ENCODE measurements at regions of chr1 and their contacts with region 1.

Region 1: GRCh38 chr1:92877792-92878191 is 46.0 kb downstream of the RPL5 start:
- DNase-seq: no peak
- H3K4me3 ChIP-seq: peak overlapping the region in 54 of 59 donors; percentile 1 to 67 (median 44)
- H3K27ac ChIP-seq: peak overlapping the region; percentile 53 to 98 (median 94)
- H3K27me3 ChIP-seq: no peaks in the 10 kb centered on the region
- CTCF ChIP-seq: no peak

Region 2: GRCh38 chr1:92944901-92945747 is 67.3 kb after region 1 on chr1:
- intact Hi-C with region 1: loop called (anchors 5 kb)
- DNase-seq: peak in 1 of 10 donors; percentile 56
- H3K4me3 ChIP-seq: peak overlapping the region in 22 of 59 donors; percentile 1 to 37 (median 14)
- H3K27ac ChIP-seq: peak overlapping the region; percentile 35 to 96 (median 90)
- H3K27me3 ChIP-seq: no peaks in the 10 kb centered on the region
- CTCF ChIP-seq: no peak

Region 3: DNA sequence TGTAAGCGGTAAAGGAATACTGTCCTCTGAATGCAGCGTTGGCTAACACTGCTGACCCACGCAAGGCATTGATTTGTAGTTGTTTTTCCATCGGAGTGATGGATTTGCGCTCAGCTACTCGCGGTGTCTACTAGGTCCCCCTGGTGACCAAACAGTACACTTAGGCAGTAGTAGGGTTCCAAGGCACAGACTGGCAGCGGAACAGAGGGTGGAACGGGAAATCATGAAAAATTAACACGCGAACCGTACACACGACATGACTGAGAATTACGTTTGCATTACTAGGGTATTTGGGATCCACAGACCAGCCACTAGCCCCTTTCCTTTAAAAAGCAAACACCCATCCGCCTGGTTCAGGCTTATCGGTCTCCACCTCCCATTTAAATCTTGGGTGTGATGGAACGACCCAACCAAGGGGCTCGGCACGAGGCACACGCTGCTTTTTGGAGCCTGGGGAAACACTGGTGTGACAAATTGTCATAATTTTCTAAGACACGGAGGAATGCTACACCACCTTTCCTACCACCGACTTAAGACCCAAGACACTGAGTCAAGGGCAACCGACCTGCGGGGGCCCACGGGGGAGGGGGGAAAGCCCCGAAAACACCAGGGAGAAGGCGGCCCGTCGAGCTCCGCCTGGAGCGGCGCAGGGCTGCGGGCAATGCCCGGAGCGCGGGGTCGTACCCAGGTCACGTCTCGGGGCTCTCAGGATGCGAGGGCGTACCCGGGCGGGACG is 82.8 kb after region 1 on chr1:
- intact Hi-C with region 1: loop called (anchors 5 kb)
- DNase-seq: peak in 9 of 10 donors; percentile 70 to 80 (median 78)
- H3K4me3 ChIP-seq: peak overlapping the region; percentile 64 to 98 (median 88)
- H3K27ac ChIP-seq: peak overlapping the region; percentile 91 to 99 (median 98)
- H3K27me3 ChIP-seq: no peaks in the 10 kb centered on the region
- CTCF ChIP-seq: peak; percentile 54 to 89 (median 79)

Region 4: DNA sequence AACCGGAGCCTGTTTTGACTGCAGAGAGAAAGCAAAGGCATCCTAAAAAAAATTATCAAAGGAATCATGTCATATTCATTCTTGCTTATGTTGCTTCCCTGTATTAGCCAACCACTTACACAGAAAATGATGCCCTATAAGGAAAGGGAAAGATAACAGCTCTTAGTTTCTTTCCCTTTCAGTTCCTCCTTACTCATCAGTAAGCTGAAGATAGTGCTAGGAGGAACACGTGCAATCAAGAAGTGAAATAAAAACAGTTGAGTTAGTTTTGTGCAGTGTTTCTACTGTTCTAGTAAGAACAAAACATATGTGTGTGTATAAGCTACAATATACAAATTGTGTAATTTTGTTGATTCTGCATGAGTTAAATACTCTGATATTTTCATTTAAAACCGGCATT is 156.0 kb after region 1 on chr1:
- intact Hi-C with region 1: no loop called
- DNase-seq: no peak
- H3K4me3 ChIP-seq: no peak overlapping the region
- H3K27ac ChIP-seq: no peak overlapping the region
- H3K27me3 ChIP-seq: no peaks in the 10 kb centered on the region
- CTCF ChIP-seq: no peak

Measured in dorsolateral prefrontal cortex (tissue), 120 donors.